Tibial artery (tissue), 4 donors: ENCODE measurements at regions of chr5 and their contacts with region 1.

Region 1: GRCh38 chr5:123371575-123372179 is 51.5 kb downstream of the CEP120 start:
- DNase-seq: peak; percentile 42 to 71
- H3K4me3 ChIP-seq: no peak overlapping the region
- H3K27ac ChIP-seq: no peak overlapping the region
- H3K4me1 ChIP-seq: peaks cover 0 to 5% (median 2%) of the 10 kb centered on the region in 4 donors
- H3K27me3 ChIP-seq: no peaks in the 10 kb centered on the region
- CTCF ChIP-seq: peak; percentile 31 to 35

Region 2: GRCh38 chr5:122515709-122516431 is 855.8 kb before region 1 on chr5:
- intact Hi-C with region 1: loop called (anchors 5 kb)
- DNase-seq: peak; percentile 43 to 69
- H3K4me3 ChIP-seq: no peak overlapping the region
- H3K27ac ChIP-seq: no peak overlapping the region
- H3K4me1 ChIP-seq: no peaks in the 10 kb centered on the region
- H3K27me3 ChIP-seq: no peaks in the 10 kb centered on the region
- CTCF ChIP-seq: peak; percentile 63 to 65

Region 3: GRCh38 chr5:122896598-122897282 is 474.9 kb before region 1 on chr5:
- intact Hi-C with region 1: loop called (anchors 5 kb)
- DNase-seq: no peak
- H3K4me3 ChIP-seq: no peak overlapping the region
- H3K27ac ChIP-seq: no peak overlapping the region
- H3K4me1 ChIP-seq: peaks cover 0 to 2% (median 0%) of the 10 kb centered on the region in 4 donors
- H3K27me3 ChIP-seq: no peaks in the 10 kb centered on the region
- CTCF ChIP-seq: peak; percentile 62 to 67

Region 4: DNA sequence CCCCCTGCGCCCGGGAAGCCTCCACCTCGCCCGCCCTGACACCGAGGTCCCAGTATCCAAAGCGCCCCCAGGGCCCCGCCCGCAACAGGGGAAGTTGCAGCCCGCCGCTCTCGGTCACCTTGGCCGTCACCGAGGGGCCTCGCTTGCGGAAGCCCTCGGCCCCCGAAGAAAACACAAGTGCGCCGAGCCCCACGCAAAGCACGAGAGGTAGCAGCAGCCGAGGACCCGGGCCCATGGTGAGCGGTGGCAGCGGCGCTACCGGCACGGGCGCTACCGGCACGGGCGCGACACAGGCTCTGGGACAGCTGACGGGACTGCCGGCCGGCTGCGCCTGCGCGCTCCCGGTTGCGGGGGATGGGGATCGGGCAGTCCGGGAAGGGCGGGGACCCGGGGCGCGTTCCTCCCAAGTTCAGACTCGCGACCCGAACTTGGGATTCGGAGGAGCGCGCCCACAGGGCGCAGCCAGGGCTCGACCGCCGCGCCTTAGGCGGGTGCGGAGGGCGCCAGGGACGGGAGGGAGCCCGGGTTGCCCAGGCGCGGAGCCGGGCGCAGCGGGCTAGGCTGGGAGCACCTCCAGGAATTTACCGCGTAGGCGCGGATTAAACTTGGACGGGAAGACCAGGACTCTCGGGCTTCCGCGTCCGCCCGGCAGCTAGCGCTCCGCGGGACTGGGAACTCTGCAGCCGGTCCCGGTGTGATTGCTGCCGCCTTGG is 335.1 kb before region 1 on chr5 and contains the start of gene PPIC:
- intact Hi-C with region 1: loop called (anchors 10 kb)
- DNase-seq: peak; percentile 86 to 94
- H3K4me3 ChIP-seq: peak within 1 kb of the TSS; percentile 86
- H3K27ac ChIP-seq: peak within 1 kb of the TSS; percentile 86 to 97
- H3K4me1 ChIP-seq: peaks cover 0 to 24% (median 15%) of the 10 kb centered on the region in 4 donors
- H3K27me3 ChIP-seq: no peaks in the 10 kb centered on the region
- CTCF ChIP-seq: no peak

Region 5: DNA sequence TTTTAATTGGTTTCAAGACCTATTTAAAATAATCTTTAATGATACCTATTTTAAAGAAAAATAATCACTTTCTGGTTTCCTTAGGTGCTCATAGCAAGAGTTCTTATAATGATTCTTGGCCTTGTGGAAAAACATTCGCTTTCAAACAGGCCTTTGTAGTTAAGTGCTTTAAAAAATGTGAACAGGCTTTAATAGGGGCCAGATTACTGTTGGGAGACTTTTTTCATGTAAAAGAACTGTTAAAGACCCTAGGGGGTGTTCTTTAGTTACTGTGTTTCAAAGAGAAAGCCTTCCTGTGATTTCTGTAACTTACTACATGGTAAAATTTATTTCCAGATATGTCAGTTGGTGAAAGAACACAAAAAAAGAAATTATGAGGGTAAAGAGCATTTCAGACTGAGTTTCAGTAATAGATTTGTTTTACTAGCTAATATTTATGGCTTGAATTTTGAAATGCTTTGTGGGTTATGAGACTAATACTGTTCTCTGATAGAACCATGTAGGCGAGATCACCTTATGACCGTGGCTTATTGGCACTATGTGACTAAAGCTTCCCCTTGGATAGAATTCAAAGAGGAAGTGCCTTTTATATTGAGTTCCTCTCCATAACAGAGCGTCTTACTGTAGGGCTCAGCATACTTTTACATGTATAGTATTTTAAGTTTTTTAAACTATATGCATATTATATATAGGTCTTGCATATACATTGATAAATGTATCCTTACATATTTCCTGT is 211.0 kb after region 1 on chr5:
- intact Hi-C with region 1: no loop called
- DNase-seq: no peak
- H3K4me3 ChIP-seq: no peak overlapping the region
- H3K27ac ChIP-seq: no peak overlapping the region
- H3K4me1 ChIP-seq: peaks cover 0 to 3% (median 0%) of the 10 kb centered on the region in 4 donors
- H3K27me3 ChIP-seq: no peaks in the 10 kb centered on the region
- CTCF ChIP-seq: no peak